ENCODE measurements at regions of chr11 and their contacts with region 1.

Region 1: GRCh38 chr11:15770798-15771414 is 585.4 kb downstream of the SOX6 start:
- DNase-seq: peak; percentile 28 to 56 (median 50)
- H3K4me3 ChIP-seq: no peak overlapping the region
- H3K4me3 Mint-ChIP-seq: no peak overlapping the region
- H3K27ac ChIP-seq: no peak overlapping the region
- H3K27ac Mint-ChIP-seq: peak overlapping the region in 1 of 7 donors; percentile 10
- H3K4me1 ChIP-seq: no peaks in the 10 kb centered on the region
- H3K4me1 Mint-ChIP-seq: no peaks in the 10 kb centered on the region
- H3K27me3 ChIP-seq: peaks cover 0 to 2% of the 10 kb centered on the region in 2 donors
- H3K27me3 Mint-ChIP-seq: peaks cover 4 to 10% (median 5%) of the 10 kb centered on the region in 3 donors
- CTCF ChIP-seq: peak; percentile 78

Region 2: DNA sequence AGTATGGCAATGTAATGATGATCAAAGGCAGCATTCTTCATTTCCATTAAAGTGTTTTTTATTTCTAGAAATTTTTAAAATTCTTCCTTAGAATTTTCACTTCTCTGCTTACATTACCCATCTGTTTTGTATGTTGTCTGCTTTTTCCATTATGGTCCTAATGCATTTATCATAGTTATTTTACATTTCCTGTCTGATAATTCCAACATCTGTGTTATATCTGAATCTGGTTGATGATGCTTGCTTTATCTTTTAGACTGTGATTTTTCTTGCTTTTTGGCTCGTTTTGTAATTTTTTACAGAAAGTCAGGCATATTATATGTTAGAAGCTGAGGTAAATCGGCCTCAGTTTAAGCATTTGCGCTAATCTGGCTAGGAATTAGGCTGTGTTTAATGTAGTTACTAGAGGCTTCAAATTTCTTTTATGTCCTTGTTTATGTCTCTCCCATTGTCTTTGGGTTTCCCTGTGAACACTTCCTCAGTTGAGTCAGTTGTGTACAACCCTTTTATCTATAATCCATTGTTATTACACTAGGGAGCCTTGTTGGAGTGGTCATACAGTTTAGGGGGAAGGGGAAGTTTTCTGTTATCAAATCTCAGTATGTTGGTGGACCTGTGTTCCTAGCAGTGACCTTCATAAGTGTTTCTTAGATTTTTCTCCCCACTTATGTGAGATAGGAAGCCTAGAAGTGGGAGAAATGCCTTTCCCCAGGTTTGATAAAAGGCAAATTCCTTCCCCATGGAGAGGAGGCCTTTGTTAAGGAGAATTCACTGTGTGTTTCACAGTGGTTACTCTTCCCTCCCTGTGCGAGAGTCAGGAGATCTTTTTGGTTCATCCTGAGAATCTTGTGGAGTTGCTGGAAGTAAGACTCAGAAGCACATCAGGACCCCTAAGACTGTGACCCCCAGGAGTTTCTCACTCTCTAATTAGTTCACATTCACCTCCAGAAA is 218.7 kb before region 1 on chr11:
- intact Hi-C with region 1: no loop called
- DNase-seq: no peak
- H3K4me3 ChIP-seq: no peak overlapping the region
- H3K4me3 Mint-ChIP-seq: no peak overlapping the region
- H3K27ac ChIP-seq: no peak overlapping the region
- H3K27ac Mint-ChIP-seq: no peak overlapping the region
- H3K4me1 ChIP-seq: no peaks in the 10 kb centered on the region
- H3K4me1 Mint-ChIP-seq: no peaks in the 10 kb centered on the region
- H3K27me3 ChIP-seq: peaks cover 0 to 3% of the 10 kb centered on the region in 2 donors
- H3K27me3 Mint-ChIP-seq: peaks cover 4 to 5% (median 4%) of the 10 kb centered on the region in 3 donors
- CTCF ChIP-seq: no peak

Region 3: GRCh38 chr11:15707971-15708370 is 62.9 kb before region 1 on chr11:
- intact Hi-C with region 1: no loop called
- DNase-seq: no peak
- H3K4me3 ChIP-seq: no peak overlapping the region
- H3K4me3 Mint-ChIP-seq: no peak overlapping the region
- H3K27ac ChIP-seq: no peak overlapping the region
- H3K27ac Mint-ChIP-seq: no peak overlapping the region
- H3K4me1 ChIP-seq: no peaks in the 10 kb centered on the region
- H3K4me1 Mint-ChIP-seq: no peaks in the 10 kb centered on the region
- H3K27me3 ChIP-seq: peaks cover 0 to 2% of the 10 kb centered on the region in 2 donors
- H3K27me3 Mint-ChIP-seq: peaks cover 0 to 3% (median 2%) of the 10 kb centered on the region in 3 donors
- CTCF ChIP-seq: no peak

Region 4: GRCh38 chr11:16613512-16614381 is 842.8 kb after region 1 on chr11:
- intact Hi-C with region 1: loop called in 1 of 2 experiments (anchors 10 kb)
- DNase-seq: peak; percentile 32 to 62 (median 46)
- H3K4me3 ChIP-seq: peak overlapping the region in 1 of 3 experiments; percentile 54
- H3K4me3 Mint-ChIP-seq: peak overlapping the region; percentile 69 to 91
- H3K27ac ChIP-seq: no peak overlapping the region
- H3K27ac Mint-ChIP-seq: no peak overlapping the region
- H3K4me1 ChIP-seq: peaks cover 11% of the 10 kb centered on the region in 2 donors
- H3K4me1 Mint-ChIP-seq: peaks cover 19% of the 10 kb centered on the region
- H3K27me3 ChIP-seq: peaks cover 79 to 92% of the 10 kb centered on the region in 2 donors
- H3K27me3 Mint-ChIP-seq: peaks cover 8 to 26% (median 24%) of the 10 kb centered on the region in 3 donors
- CTCF ChIP-seq: peak; percentile 77